ENCODE measurements at regions of chr2 and their contacts with region 1.

Region 1: DNA sequence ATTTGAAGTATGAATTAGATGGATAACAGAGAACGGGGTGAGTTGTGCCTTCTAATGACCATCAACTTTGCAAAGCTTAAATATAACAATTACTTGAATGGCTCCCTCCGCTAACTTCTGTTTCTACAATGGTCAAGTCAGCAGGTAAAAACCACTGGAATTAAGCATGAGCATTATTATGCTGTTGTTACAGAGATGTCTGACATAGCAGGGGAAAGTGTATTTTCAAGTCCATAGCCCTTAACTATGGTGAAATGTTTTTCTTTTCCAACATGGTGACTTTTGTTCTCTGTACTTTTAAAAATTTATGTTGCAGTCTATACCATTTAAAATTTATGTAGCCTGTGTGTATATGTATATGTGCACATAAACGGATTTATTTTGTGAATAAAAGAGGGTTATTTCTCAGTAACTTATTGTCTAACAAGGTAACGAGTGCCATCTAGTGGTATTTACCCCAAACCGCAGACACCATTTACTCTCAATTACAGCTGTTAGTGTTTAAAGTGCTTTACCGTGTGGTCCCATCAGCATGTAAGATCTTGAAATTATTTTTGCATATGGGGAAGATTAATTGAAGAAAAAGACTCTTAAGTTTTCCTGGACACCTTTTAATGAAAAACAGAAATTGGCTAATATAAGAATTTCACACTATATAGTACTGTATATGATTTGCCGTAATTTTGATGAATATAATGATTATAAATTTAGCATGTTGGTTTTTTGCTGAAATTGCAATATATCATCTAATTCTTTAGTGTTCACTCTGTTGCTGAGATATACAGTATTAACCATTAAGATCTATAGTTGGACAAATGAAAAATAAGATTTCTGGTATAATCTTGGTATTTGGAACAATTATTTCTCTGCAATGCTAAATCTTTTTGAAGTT is 78.2 kb downstream of the UBE2E3 start:
- DNase-seq: peak; percentile 57
- ATAC-seq: peak; percentile 42
- H3K4me3 Mint-ChIP-seq: no peak overlapping the region
- H3K27ac Mint-ChIP-seq: no peak overlapping the region
- H3K4me1 Mint-ChIP-seq: peaks cover 9% of the 10 kb centered on the region
- H3K27me3 Mint-ChIP-seq: no peaks in the 10 kb centered on the region

Region 2: DNA sequence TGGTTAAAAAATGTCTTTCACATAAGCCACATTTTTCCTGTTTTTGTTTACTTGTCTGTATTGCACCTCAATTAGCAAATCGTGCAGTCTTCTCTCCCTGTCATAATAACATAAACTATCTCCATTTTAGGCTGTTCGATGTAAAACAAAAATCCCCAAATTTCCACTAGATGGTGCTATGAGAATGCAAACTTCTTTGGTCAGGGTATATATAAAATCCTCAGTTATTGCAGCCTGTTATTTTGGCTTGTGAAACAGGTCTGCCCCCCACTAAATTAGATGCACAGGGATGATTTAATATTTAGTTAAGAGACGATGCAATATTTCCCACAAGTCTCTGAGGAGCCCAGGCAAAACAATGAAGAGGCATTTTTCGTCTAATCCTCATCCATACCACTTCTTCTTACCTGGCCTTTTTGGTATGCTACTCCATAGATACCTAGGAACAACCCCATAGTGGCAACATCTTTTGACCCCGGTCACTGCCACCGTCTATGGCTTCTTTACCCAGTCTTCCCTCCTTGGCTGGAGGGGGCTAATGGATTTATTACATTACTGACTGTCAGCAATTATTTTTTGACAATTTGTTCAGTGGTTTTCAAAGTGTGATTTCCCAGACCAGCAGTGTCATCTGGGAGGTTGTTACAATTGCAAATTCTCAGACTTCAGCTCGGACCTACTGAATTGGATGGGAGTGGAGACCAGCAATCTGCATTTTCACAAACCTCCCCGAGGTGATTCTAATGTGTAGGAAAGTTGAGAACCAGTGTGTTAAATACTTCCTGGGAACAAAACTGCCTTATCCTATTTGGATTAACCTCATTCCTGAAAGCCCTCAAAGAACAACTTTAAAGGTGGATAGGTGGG is 934.1 kb before region 1 on chr2:
- CTCF ChIA-PET with region 1: interaction called, 22 read pairs
- DNase-seq: no peak
- ATAC-seq: peak; percentile 59
- H3K4me3 Mint-ChIP-seq: no peak overlapping the region
- H3K27ac Mint-ChIP-seq: no peak overlapping the region
- H3K4me1 Mint-ChIP-seq: peaks cover 4% of the 10 kb centered on the region
- H3K27me3 Mint-ChIP-seq: peaks cover 18% of the 10 kb centered on the region

Region 3: DNA sequence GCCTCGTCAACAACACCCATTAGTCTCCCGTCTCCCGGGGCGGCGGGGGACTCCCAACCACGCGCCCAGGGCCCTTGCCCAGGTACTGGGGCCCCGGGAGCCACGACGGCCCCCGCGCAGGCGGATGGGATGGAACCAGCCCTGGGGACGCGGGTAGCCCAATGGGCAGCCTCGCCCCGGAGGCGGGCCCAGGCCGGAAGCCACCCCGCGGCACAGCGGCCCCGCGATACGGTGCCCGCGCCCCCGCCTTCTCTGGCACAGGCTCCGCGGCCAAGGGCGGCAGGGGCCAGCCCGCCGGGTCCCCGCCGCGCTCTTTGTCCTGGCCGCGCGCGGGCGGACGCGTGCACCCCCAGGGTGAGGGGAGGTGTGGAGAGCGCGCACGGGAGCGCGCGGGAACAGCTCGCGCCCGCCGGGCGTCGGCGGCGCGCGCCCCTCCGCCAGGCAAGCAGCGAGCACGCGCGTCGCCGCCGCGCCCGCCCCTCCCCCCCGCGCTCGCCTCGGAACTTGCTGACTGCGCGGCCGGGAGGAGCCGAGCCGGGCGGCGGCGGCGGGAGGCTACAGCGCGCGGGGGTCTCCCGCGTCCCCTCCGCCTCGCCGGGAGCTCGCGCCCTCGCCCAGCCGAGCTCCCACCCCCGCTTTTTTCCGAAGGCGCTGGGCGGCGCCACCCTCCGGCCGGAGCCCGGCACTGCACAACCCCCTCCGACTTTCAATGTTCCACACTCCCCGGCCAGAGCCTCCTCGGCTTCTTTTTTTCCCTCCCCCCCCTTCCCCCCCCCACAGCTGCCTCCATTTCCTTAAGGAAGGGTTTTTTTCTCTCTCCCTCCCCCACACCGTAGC is 78.3 kb before region 1 on chr2 and contains the start of gene UBE2E3:
- CTCF ChIA-PET with region 1: interaction called, 21 read pairs
- DNase-seq: peak; percentile 85
- ATAC-seq: peak; percentile 86
- H3K4me3 Mint-ChIP-seq: peak within 1 kb of the TSS; percentile 95
- H3K27ac Mint-ChIP-seq: peak within 1 kb of the TSS; percentile 96
- H3K4me1 Mint-ChIP-seq: peaks cover 39% of the 10 kb centered on the region
- H3K27me3 Mint-ChIP-seq: peaks cover 28% of the 10 kb centered on the region
- total RNA-seq, gene UBE2E3: 35.0 to 49.6 TPM

Region 4: GRCh38 chr2:181046833-181047232 is 11.8 kb before region 1 on chr2:
- CTCF ChIA-PET with region 1: interaction called, 20 read pairs
- DNase-seq: no peak
- ATAC-seq: peak; percentile 78
- H3K4me3 Mint-ChIP-seq: no peak overlapping the region
- H3K27ac Mint-ChIP-seq: no peak overlapping the region
- H3K4me1 Mint-ChIP-seq: peaks cover 4% of the 10 kb centered on the region
- H3K27me3 Mint-ChIP-seq: no peaks in the 10 kb centered on the region

Region 5: DNA sequence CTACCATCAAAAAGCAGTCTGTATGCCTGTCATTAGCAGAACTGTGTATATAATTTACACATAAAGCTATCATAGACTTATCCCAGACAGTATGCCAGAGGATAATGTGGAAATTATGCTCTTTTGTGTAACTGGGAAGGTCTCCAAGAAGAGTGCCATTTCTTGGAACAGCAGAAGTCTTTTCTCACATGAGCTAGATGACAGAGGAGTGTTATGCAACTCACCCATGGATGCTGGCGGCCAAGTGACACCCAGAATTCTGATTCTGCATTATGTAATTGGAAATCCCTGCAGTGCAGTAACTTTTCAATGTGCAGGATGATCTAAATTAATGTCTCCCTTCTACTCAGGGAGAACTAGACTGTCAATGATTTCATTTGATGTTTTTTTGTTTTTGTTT is 81.8 kb after region 1 on chr2:
- CTCF ChIA-PET with region 1: no interaction called
- DNase-seq: no peak
- ATAC-seq: no peak
- H3K4me3 Mint-ChIP-seq: peak overlapping the region; percentile 70
- H3K27ac Mint-ChIP-seq: peak overlapping the region; percentile 91
- H3K4me1 Mint-ChIP-seq: peaks cover 85% of the 10 kb centered on the region
- H3K27me3 Mint-ChIP-seq: no peaks in the 10 kb centered on the region